PC-9 (cell line): ENCODE measurements at regions of chr2 and their contacts with region 1.

Region 1: GRCh38 chr2:18991177-18992168 is 366.9 kb downstream of the OSR1 start:
- DNase-seq: peak; percentile 88 to 99
- H3K4me3 ChIP-seq: peak overlapping the region; percentile 16; the same call in 1 of the 2 replicates
- H3K27ac ChIP-seq: peak overlapping the region; percentile 87
- H3K4me1 ChIP-seq: peaks cover 44% of the 10 kb centered on the region
- H3K27me3 ChIP-seq: no peaks in the 10 kb centered on the region
- CTCF ChIP-seq: no peak

Region 2: GRCh38 chr2:18520451-18521425 is 470.7 kb before region 1 on chr2:
- CTCF ChIA-PET with region 1: no interaction called
- POLR2A ChIA-PET with region 1: no interaction called
- intact Hi-C with region 1: loop called (anchors 5 kb)
- DNase-seq: peak; percentile 56 to 73
- H3K4me3 ChIP-seq: no peak overlapping the region
- H3K27ac ChIP-seq: no peak overlapping the region
- H3K4me1 ChIP-seq: 0 out of 2 replicates have a peak, but pooled peaks cover 12% of the 10 kb centered on the region
- H3K27me3 ChIP-seq: no peaks in the 10 kb centered on the region
- CTCF ChIP-seq: peak; percentile 97

Region 3: DNA sequence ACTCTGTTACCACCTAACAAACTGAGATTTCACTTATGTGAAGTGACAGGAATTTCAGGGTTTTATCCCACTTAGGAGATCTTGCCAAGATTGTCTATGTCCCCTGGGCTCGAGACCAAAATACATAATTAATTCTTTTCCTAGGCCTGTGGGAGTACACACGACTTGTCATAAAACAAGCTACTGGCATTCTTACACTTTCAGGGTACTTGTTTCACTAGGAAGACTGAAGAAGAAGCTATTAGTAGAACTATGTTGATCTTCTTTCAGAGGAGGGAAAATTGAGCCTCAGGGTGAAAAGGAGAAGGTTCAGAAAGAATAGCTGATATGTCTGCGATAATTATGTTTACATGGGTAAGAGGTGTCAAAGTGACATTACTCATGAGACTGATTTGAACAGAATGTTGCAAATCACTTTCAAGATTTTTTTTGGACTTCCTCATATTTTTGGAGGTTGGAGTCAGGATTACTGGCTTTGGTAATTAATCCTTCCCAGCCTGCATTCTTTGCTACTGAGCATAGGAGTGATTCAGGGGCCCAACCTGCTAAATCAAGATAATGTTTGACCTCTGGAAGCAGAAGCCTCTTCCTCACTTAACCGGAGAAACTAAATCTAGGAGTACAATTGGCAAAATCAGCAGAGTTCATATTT is 162.1 kb before region 1 on chr2:
- CTCF ChIA-PET with region 1: no interaction called
- POLR2A ChIA-PET with region 1: no interaction called
- intact Hi-C with region 1: loop called (anchors 1 kb)
- DNase-seq: peak; percentile 55 to 99
- H3K4me3 ChIP-seq: peak overlapping the region; percentile 15; the same call in 1 of the 2 replicates
- H3K27ac ChIP-seq: peak overlapping the region; percentile 82
- H3K4me1 ChIP-seq: peaks cover 86% of the 10 kb centered on the region
- H3K27me3 ChIP-seq: no peaks in the 10 kb centered on the region
- CTCF ChIP-seq: no peak

Region 4: DNA sequence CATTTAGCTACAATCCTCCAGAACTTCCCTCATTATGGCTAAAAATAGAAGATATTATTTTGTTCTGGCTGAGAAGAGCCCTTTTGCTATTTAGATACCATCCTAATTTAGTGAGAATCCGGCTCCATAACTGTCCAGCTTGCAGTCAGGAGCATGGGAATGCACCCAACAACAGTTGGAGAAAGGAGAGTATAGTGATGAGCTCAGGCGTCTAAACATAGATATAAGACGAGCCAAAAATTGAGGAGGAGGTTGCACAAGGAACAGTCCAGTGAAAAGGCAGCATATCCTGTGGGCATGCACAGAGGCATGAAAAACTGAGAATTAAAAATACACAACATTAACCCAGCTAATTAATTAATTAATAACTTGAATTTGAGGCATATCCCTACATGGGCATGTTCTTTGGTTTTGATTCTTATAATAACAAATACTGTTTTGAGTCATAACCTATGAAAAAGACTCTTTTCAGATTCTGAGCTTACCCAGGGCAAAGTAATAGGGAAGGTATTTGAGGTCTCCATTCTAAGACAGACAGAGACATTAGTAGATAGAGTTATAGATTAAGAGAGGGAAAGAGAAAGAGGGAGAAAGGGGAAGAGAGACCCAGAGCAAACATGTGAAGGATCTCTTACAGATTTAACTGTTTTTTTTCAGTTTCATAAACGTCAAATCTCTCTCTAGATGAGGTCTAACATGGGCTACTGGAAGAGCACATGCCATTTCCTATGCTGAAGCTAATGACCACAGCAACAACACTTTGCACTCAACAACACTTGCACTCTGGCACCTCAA is 55.7 kb after region 1 on chr2:
- CTCF ChIA-PET with region 1: no interaction called
- POLR2A ChIA-PET with region 1: no interaction called
- intact Hi-C with region 1: no loop called
- DNase-seq: no peak
- H3K4me3 ChIP-seq: no peak overlapping the region
- H3K27ac ChIP-seq: no peak overlapping the region
- H3K4me1 ChIP-seq: peaks cover 9% of the 10 kb centered on the region; the same call in 1 of the 2 replicates
- H3K27me3 ChIP-seq: no peaks in the 10 kb centered on the region
- CTCF ChIP-seq: no peak

Region 5: GRCh38 chr2:19073522-19073921 is 82.0 kb after region 1 on chr2:
- CTCF ChIA-PET with region 1: no interaction called
- POLR2A ChIA-PET with region 1: no interaction called
- intact Hi-C with region 1: loop called (anchors 1 kb)
- DNase-seq: peak; percentile 84 to 87
- H3K4me3 ChIP-seq: no peak overlapping the region
- H3K27ac ChIP-seq: no peak overlapping the region; the same call in 1 of the 2 replicates
- H3K4me1 ChIP-seq: peaks cover 36% of the 10 kb centered on the region
- H3K27me3 ChIP-seq: no peaks in the 10 kb centered on the region
- CTCF ChIP-seq: no peak

Region 6: DNA sequence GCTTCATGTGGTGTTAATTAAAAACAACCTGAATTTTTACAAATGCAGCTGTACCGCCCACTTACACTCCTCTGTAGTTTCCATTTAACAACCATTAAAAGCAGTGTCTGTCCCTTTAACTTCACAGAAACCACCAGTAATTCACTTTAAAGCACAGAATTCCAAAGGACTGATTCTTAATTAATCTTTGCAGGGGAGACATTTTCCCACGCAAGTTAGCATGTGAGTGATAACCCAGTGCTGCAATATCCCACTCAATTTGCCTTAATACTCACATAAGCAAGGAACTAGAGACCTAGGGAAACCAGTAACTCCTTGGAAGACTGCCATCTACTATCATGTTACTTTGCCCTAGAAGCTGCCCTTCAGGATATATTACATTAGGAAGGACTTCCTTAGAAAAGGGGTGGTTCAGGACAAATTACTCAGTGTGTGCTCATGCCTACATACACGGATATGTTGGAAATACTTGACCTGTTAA is 264.7 kb after region 1 on chr2:
- CTCF ChIA-PET with region 1: no interaction called
- POLR2A ChIA-PET with region 1: no interaction called
- intact Hi-C with region 1: loop called (anchors 5 kb)
- DNase-seq: peak; percentile 16 to 96
- H3K4me3 ChIP-seq: peak overlapping the region; percentile 1; the same call in 1 of the 2 replicates
- H3K27ac ChIP-seq: peak overlapping the region; percentile 78
- H3K4me1 ChIP-seq: peaks cover 27% of the 10 kb centered on the region
- H3K27me3 ChIP-seq: no peaks in the 10 kb centered on the region
- CTCF ChIP-seq: no peak

Region 7: DNA sequence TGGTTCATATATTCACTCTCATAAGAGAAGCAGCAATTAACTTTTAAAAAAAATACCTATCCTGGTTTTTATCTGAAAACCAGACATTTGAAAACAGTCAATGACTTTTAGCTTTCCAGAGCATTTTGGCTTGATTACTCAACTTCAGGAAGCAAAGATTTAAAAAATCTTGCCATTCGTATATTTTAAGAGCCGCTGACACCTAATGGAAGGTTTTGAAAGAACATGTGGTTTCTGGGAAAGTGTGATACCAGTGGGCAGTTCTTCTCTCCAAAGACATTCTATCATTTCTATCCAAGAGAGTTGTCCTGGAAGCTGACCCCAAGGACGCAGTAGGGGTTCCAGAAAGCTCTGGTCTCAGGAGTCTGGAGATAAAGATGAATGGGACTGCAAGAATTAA is 675.6 kb after region 1 on chr2:
- CTCF ChIA-PET with region 1: no interaction called
- POLR2A ChIA-PET with region 1: no interaction called
- intact Hi-C with region 1: loop called (anchors 5 kb)
- DNase-seq: no peak
- H3K4me3 ChIP-seq: no peak overlapping the region
- H3K27ac ChIP-seq: 0 out of 2 replicates have a peak overlapping the region, but pooled peaks have one; percentile 8
- H3K4me1 ChIP-seq: peaks cover 10% of the 10 kb centered on the region
- H3K27me3 ChIP-seq: no peaks in the 10 kb centered on the region
- CTCF ChIP-seq: peak; percentile 63; the same call in 1 of the 2 replicates